ENCODE measurements at regions of chr13 and their contacts with region 1.

Region 1: GRCh38 chr13:100254002-100254401 is 165.1 kb downstream of the PCCA start:
- DNase-seq: no peak
- H3K4me3 ChIP-seq: no peak overlapping the region
- CTCF ChIP-seq: no peak

Region 2: GRCh38 chr13:100301418-100301817 is 47.4 kb after region 1 on chr13:
- in situ Hi-C with region 1: loop called (anchors 5 kb)
- DNase-seq: peak; percentile 4
- H3K4me3 ChIP-seq: no peak overlapping the region
- CTCF ChIP-seq: no peak

Region 3: GRCh38 chr13:100338275-100338674 is 84.3 kb after region 1 on chr13:
- in situ Hi-C with region 1: no loop called
- DNase-seq: no peak
- H3K4me3 ChIP-seq: no peak overlapping the region
- CTCF ChIP-seq: no peak

Measured in astrocyte of the cerebellum (primary cell).